MCF 10A (cell line): ENCODE measurements at regions of chr1 and their contacts with region 1.

Region 1: DNA sequence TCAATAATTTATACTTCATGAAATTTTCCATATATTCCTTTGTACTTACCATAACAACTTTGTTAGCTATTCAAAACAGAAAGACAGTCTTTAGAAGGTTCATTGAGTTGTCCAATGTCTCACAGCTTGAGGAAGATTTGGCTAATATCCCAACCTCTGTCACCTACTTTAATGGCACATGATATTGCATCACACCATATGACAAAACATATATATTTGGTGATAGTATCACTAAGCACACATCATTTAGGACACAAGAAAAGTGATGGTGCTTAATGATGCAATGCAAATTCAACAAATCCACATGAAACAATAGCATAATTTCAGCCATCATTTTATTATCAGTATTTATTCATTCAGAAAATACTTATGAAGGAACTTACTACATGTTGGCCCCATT is 122.0 kb upstream of the BRINP3 start:
- DNase-seq: no peak
- H3K4me3 Mint-ChIP-seq: no peak overlapping the region
- H3K27ac Mint-ChIP-seq: no peak overlapping the region
- H3K4me1 Mint-ChIP-seq: no peaks in the 10 kb centered on the region
- H3K27me3 Mint-ChIP-seq: no peaks in the 10 kb centered on the region
- CTCF ChIP-seq: no peak

Region 2: GRCh38 chr1:189036628-189037027 is 1563.1 kb before region 1 on chr1:
- CTCF ChIA-PET with region 1: no interaction called
- POLR2A ChIA-PET with region 1: no interaction called
- intact Hi-C with region 1: loop called (anchors 5 kb)
- DNase-seq: no peak
- H3K4me3 Mint-ChIP-seq: no peak overlapping the region
- H3K27ac Mint-ChIP-seq: no peak overlapping the region
- H3K4me1 Mint-ChIP-seq: no peaks in the 10 kb centered on the region
- H3K27me3 Mint-ChIP-seq: no peaks in the 10 kb centered on the region
- CTCF ChIP-seq: no peak

Region 3: GRCh38 chr1:190452272-190452848 is 147.3 kb before region 1 on chr1:
- CTCF ChIA-PET with region 1: no interaction called
- POLR2A ChIA-PET with region 1: no interaction called
- intact Hi-C with region 1: no loop called
- DNase-seq: no peak
- H3K4me3 Mint-ChIP-seq: no peak overlapping the region
- H3K27ac Mint-ChIP-seq: no peak overlapping the region
- H3K4me1 Mint-ChIP-seq: no peaks in the 10 kb centered on the region
- H3K27me3 Mint-ChIP-seq: no peaks in the 10 kb centered on the region
- CTCF ChIP-seq: no peak